Naive thymus-derived CD4-positive, alpha-beta T cell (primary cell): ENCODE measurements at regions of chr3 and their contacts with region 1.

Region 1: DNA sequence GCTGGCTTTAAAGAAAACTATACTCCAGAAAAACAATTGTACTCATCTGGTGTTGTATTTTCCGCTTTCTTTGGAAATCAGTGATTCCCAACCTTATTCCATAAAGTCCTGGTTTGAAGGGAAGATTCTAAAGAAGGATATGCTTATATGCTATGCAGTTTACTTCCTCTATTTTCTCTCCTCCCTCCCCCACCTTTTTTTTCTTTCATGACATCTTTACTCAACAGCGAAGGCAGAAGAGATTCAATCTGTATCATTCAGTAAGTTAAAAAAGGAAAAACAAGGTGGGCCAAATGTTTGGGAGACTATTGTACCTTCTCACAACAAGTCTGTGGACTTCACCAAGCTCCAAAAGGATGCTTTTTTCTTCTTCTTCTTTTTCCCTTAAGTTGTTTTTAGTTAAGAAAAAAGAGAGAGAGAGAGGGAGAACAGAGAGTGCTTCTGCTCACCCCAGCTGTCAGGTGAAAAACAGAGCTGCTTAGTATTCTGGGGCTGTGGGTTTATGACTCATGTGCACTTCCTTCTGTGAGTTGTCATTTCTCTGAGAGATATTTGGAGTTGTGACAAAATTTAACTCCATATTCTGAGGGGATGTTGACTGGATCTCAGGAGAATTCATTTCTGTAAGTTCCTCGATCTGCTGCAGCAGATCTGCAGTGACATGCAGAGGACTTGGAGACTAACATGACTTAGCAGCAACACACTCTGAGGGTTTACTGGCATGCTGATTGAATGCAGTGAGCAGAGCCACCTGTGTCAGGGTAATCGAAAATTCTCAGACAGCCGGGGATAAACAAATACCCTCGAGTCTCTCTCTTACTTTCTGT is 70.7 kb downstream of the SSR3 start:
- DNase-seq: peak in 8 of 9 donors; percentile 35 to 68 (median 62)
- ATAC-seq: peak; percentile 88
- H3K4me3 ChIP-seq: peak overlapping the region; percentile 47
- H3K4me3 Mint-ChIP-seq: peak overlapping the region; percentile 52 to 85 (median 74)
- H3K27ac ChIP-seq: peak overlapping the region; percentile 63
- H3K27ac Mint-ChIP-seq: peak overlapping the region; percentile 76 to 95 (median 83)
- H3K4me1 ChIP-seq: peaks cover 21 to 25% of the 10 kb centered on the region in 2 donors
- H3K4me1 Mint-ChIP-seq: peaks cover 14 to 40% (median 35%) of the 10 kb centered on the region in 7 donors
- H3K27me3 ChIP-seq: no peaks in the 10 kb centered on the region
- H3K27me3 Mint-ChIP-seq: peaks cover 0 to 17% (median 0%) of the 10 kb centered on the region in 5 donors

Region 2: GRCh38 chr3:156449712-156450574 is 34.2 kb before region 1 on chr3:
- CTCF ChIA-PET with region 1: interaction called, 3 read pairs
- POLR2A ChIA-PET with region 1: interaction called, 3 read pairs
- intact Hi-C with region 1: loop called in 1 of 2 experiments (anchors 1 kb)
- DNase-seq: no peak
- ATAC-seq: no peak
- H3K4me3 ChIP-seq: no peak overlapping the region
- H3K4me3 Mint-ChIP-seq: no peak overlapping the region
- H3K27ac ChIP-seq: no peak overlapping the region
- H3K27ac Mint-ChIP-seq: no peak overlapping the region
- H3K4me1 ChIP-seq: no peaks in the 10 kb centered on the region
- H3K4me1 Mint-ChIP-seq: peaks cover 0 to 2% (median 0%) of the 10 kb centered on the region in 7 donors
- H3K27me3 ChIP-seq: no peaks in the 10 kb centered on the region
- H3K27me3 Mint-ChIP-seq: peaks cover 8 to 45% (median 9%) of the 10 kb centered on the region in 5 donors

Region 3: DNA sequence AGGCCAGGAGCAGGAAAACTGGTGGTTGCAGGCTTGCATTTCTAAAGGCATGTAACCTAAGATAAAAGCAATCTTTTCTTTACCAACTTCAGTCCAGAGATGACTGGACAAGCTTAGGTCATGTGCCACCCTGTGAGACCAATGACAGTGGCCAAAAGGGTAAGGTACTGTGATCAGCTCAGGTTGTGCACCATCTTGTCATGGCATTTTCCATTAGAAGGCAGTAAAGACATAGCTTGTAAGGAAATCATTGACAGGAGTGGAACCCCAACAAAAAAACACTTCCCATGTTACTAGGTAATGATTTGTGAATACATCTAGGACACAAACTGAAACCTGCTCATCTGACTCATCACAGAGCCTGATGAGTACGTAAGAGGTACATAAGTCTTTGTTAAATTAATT is 35.6 kb after region 1 on chr3:
- CTCF ChIA-PET with region 1: interaction called, 3 read pairs
- POLR2A ChIA-PET with region 1: interaction called, 5 read pairs
- intact Hi-C with region 1: loop called (anchors 1 kb)
- DNase-seq: no peak
- ATAC-seq: no peak
- H3K4me3 ChIP-seq: no peak overlapping the region
- H3K4me3 Mint-ChIP-seq: no peak overlapping the region
- H3K27ac ChIP-seq: no peak overlapping the region
- H3K27ac Mint-ChIP-seq: no peak overlapping the region
- H3K4me1 ChIP-seq: peaks cover 2 to 6% of the 10 kb centered on the region in 2 donors
- H3K4me1 Mint-ChIP-seq: peaks cover 6 to 26% (median 9%) of the 10 kb centered on the region in 7 donors
- H3K27me3 ChIP-seq: no peaks in the 10 kb centered on the region
- H3K27me3 Mint-ChIP-seq: peaks cover 13 to 84% (median 33%) of the 10 kb centered on the region in 5 donors

Region 4: GRCh38 chr3:157088601-157089454 is 604.7 kb after region 1 on chr3:
- CTCF ChIA-PET with region 1: interaction called, 3 read pairs
- POLR2A ChIA-PET with region 1: no interaction called
- intact Hi-C with region 1: loop called in 1 of 2 experiments (anchors 1 kb)
- DNase-seq: peak; percentile 90 to 97 (median 93)
- ATAC-seq: peak; percentile 95
- H3K4me3 ChIP-seq: peak overlapping the region; percentile 84
- H3K4me3 Mint-ChIP-seq: peak overlapping the region; percentile 81 to 89 (median 87)
- H3K27ac ChIP-seq: peak overlapping the region; percentile 83
- H3K27ac Mint-ChIP-seq: peak overlapping the region; percentile 92 to 98 (median 96)
- H3K4me1 ChIP-seq: peaks cover 11 to 30% of the 10 kb centered on the region in 2 donors
- H3K4me1 Mint-ChIP-seq: peaks cover 11 to 79% (median 23%) of the 10 kb centered on the region in 7 donors
- H3K27me3 ChIP-seq: no peaks in the 10 kb centered on the region
- H3K27me3 Mint-ChIP-seq: peaks cover 0 to 6% (median 0%) of the 10 kb centered on the region in 5 donors